Cardiac septum (tissue), 1 donor: ENCODE measurements at regions of chr3 and their contacts with region 1.

Region 1: GRCh38 chr3:51498876-51499738 is 708 bp downstream of the DCAF1 start:
- DNase-seq: peak; percentile 96

Region 2: GRCh38 chr3:50350527-50351322 is 1148.4 kb before region 1 on chr3 and contains the starts of genes CYB561D2 and NPRL2:
- intact Hi-C with region 1: loop called (anchors 5 kb)
- DNase-seq: peak; percentile 100
- total RNA-seq, gene CYB561D2: 6.4 TPM
- total RNA-seq, gene NPRL2: 19.1 TPM

Region 3: DNA sequence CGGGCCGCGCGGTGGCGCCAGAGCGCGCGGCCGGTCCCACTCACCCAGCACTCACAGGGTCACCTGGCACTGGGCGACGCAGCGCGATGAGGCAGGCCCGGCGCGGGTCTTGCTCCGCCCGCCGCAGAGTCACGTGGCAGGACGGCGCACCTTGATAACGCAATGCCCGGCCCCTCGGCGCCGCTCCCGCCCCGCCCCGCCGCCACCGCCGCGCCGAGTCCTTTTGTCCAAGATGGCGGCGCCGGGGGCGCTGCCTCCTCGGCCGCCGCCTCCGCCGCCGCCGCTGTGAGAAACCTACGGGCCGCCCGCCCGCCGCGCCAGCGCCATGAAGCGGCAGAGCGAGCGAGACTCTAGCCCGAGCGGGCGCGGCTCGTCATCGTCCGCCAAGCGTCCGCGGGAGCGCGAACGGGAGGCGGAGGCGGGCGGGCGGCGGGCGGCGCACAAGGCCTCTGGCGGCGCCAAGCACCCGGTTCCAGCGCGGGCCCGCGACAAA is 108.0 kb before region 1 on chr3 and contains the start of gene RBM15B:
- intact Hi-C with region 1: loop called (anchors 2 kb)
- DNase-seq: peak; percentile 99
- total RNA-seq, gene RBM15B: 18.1 TPM

Region 4: DNA sequence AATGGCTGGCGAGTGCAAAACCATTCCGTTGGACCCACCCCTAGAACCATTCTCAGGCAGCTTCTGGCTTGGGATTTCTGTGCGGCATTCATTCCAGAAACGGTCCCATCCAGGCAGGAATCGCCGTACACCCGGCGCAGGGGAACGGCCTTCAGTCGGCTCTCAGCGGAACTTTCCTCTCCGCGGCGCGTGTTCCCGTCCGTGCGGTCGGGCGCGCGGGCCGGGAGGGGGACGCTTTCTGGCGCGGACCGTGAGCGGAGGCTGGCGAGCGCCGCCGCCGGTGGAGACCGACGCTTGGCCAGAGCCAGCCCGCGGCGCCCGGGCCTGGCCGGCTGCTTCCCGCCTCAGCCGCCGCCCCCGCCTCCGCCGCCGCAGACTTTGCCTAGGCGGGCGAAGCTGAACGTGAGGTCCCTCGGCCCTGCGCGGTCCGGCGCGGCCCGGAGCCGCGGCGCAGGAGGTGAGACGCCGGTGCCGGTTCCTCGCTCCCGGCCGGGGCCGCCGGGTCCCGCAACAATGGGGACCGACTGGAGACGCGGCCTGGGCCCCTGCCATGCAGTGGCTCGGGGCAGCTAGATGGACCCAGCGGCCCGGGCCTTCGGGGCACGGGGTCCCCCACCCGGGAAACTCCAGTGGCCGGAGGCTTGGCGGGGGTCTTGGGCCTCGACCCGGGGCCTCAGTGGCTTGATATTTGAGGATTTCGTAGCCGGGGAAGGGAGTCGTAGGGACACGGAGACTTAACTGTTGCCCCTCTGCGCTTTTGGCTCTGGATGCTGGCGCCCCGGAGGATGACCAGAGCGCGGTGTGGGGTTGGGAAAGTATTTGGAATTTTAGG is 39.6 kb after region 1 on chr3 and contains the start of gene RAD54L2:
- intact Hi-C with region 1: loop called (anchors 2 kb)
- DNase-seq: peak; percentile 91
- total RNA-seq, gene RAD54L2: 16.5 TPM

Region 5: GRCh38 chr3:51670823-51671733 is 172.0 kb after region 1 on chr3 and contains the start of gene TEX264:
- intact Hi-C with region 1: loop called (anchors 2 kb)
- DNase-seq: peak; percentile 97
- total RNA-seq, gene TEX264: 28.8 TPM

Region 6: GRCh38 chr3:51799879-51800749 is 301.0 kb after region 1 on chr3:
- intact Hi-C with region 1: loop called (anchors 2 kb)
- DNase-seq: no peak